ENCODE measurements at regions of chr1 and their contacts with region 1.

Region 1: DNA sequence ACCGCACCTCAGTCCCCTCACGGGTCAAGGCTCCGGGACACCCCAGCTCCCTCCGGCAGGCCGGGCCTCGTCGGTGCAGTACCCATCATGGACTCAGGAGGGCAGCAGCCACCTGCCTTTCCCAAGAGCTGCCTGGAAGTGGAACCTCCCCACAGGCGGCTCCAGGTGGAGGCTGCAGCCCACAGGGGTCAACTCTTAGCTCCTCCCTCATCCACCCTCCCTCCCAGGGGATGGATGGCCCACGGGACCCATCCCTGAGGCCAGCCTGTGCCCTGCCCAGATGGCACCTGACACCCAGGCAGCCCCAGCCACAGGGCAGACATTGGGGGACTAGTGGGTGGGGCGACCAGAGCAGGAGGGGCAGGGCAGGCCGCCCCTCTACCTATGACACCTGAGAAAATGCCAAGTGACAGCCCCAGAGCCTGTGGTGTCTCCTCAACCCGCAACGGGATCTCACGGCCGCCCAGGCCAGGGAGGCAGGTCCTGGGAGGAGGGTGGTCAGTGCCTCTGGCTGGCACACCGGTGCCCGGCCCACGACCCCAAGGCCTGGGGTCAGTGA is 1.2 kb upstream of the ARHGEF16 start:
- DNase-seq: peak; percentile 51 to 85 (median 74)
- ATAC-seq: peak; percentile 89
- H3K4me3 ChIP-seq: no peak overlapping the region
- H3K4me3 Mint-ChIP-seq: peak overlapping the region; percentile 76
- H3K27ac ChIP-seq: no peak overlapping the region
- H3K27ac Mint-ChIP-seq: no peak overlapping the region
- H3K4me1 ChIP-seq: peaks cover 11% of the 10 kb centered on the region
- H3K4me1 Mint-ChIP-seq: no peaks in the 10 kb centered on the region
- H3K27me3 ChIP-seq: peaks cover 7 to 15% of the 10 kb centered on the region in 2 experiments
- H3K27me3 Mint-ChIP-seq: peaks cover 17% of the 10 kb centered on the region
- CTCF ChIP-seq: peak; percentile 79

Region 2: GRCh38 chr1:3237994-3238702 is 215.1 kb before region 1 on chr1:
- CTCF ChIA-PET with region 1: no interaction called
- POLR2A ChIA-PET with region 1: no interaction called
- intact Hi-C with region 1: no loop called
- DNase-seq: no peak
- ATAC-seq: no peak
- H3K4me3 ChIP-seq: no peak overlapping the region
- H3K4me3 Mint-ChIP-seq: no peak overlapping the region
- H3K27ac ChIP-seq: no peak overlapping the region
- H3K27ac Mint-ChIP-seq: no peak overlapping the region
- H3K4me1 ChIP-seq: no peaks in the 10 kb centered on the region
- H3K4me1 Mint-ChIP-seq: no peaks in the 10 kb centered on the region
- H3K27me3 ChIP-seq: no peaks in the 10 kb centered on the region
- H3K27me3 Mint-ChIP-seq: no peaks in the 10 kb centered on the region
- CTCF ChIP-seq: no peak

Region 3: DNA sequence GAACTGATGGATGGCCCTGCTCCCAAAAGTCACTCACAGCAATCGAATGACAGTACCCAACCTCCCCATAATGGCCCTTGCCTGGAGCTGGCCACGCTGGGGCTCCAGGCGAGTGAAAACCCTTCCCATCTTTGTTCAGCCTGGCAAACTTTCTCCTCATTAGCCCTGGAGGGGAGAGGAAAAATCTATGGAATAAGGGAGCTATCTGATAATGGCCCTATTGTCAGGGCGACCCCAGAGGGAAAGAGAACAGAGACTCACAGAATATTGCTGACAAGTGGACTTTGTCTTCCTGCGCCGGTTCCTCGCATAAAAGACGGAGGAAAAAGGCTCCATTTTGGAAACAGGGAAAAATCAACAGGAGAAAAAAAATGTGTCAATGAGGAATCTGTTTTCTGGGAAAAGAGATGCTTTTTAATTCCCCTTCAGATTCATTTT is 11.9 kb before region 1 on chr1:
- CTCF ChIA-PET with region 1: interaction called, 19 read pairs
- POLR2A ChIA-PET with region 1: no interaction called
- intact Hi-C with region 1: no loop called
- DNase-seq: no peak
- ATAC-seq: no peak
- H3K4me3 ChIP-seq: no peak overlapping the region
- H3K4me3 Mint-ChIP-seq: no peak overlapping the region
- H3K27ac ChIP-seq: no peak overlapping the region
- H3K27ac Mint-ChIP-seq: no peak overlapping the region
- H3K4me1 ChIP-seq: no peaks in the 10 kb centered on the region
- H3K4me1 Mint-ChIP-seq: no peaks in the 10 kb centered on the region
- H3K27me3 ChIP-seq: no peaks in the 10 kb centered on the region
- H3K27me3 Mint-ChIP-seq: peaks cover 9% of the 10 kb centered on the region
- CTCF ChIP-seq: no peak

Region 4: DNA sequence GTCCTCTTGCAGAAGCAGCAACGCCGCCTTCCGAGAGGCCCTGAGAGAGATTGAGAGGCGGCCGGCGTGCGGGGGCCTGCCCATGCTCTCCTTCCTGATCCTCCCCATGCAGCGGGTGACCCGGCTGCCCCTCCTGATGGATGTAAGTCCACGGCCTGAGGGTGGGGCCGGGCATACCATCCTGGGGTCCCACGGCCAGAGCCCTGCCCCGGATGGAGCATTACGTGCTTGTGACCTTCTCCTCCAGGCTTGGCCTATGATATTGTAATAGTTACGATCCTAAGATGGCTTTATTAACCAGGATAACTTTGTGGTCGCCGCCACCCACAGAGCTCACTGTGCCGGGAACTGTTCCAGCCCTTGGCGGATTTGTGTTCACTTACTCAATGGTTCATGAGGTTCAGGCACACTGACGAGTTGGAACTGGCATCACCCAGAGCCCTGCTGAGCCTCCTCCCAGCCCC is 20.1 kb after region 1 on chr1:
- CTCF ChIA-PET with region 1: interaction called, 11 read pairs
- POLR2A ChIA-PET with region 1: no interaction called
- intact Hi-C with region 1: no loop called
- DNase-seq: no peak
- ATAC-seq: no peak
- H3K4me3 ChIP-seq: no peak overlapping the region
- H3K4me3 Mint-ChIP-seq: no peak overlapping the region
- H3K27ac ChIP-seq: no peak overlapping the region
- H3K27ac Mint-ChIP-seq: no peak overlapping the region
- H3K4me1 ChIP-seq: no peaks in the 10 kb centered on the region
- H3K4me1 Mint-ChIP-seq: no peaks in the 10 kb centered on the region
- H3K27me3 ChIP-seq: no peaks in the 10 kb centered on the region
- H3K27me3 Mint-ChIP-seq: peaks cover 2% of the 10 kb centered on the region
- CTCF ChIP-seq: no peak

Region 5: GRCh38 chr1:3483801-3484444 is 30.6 kb after region 1 on chr1:
- CTCF ChIA-PET with region 1: interaction called, 9 read pairs
- POLR2A ChIA-PET with region 1: no interaction called
- intact Hi-C with region 1: loop called in 1 of 2 experiments (anchors 1 kb)
- DNase-seq: peak in 5 of 9 experiments; percentile 9 to 46 (median 40)
- ATAC-seq: no peak
- H3K4me3 ChIP-seq: no peak overlapping the region
- H3K4me3 Mint-ChIP-seq: no peak overlapping the region
- H3K27ac ChIP-seq: no peak overlapping the region
- H3K27ac Mint-ChIP-seq: no peak overlapping the region
- H3K4me1 ChIP-seq: no peaks in the 10 kb centered on the region
- H3K4me1 Mint-ChIP-seq: no peaks in the 10 kb centered on the region
- H3K27me3 ChIP-seq: no peaks in the 10 kb centered on the region
- H3K27me3 Mint-ChIP-seq: no peaks in the 10 kb centered on the region
- CTCF ChIP-seq: peak; percentile 78

Region 6: DNA sequence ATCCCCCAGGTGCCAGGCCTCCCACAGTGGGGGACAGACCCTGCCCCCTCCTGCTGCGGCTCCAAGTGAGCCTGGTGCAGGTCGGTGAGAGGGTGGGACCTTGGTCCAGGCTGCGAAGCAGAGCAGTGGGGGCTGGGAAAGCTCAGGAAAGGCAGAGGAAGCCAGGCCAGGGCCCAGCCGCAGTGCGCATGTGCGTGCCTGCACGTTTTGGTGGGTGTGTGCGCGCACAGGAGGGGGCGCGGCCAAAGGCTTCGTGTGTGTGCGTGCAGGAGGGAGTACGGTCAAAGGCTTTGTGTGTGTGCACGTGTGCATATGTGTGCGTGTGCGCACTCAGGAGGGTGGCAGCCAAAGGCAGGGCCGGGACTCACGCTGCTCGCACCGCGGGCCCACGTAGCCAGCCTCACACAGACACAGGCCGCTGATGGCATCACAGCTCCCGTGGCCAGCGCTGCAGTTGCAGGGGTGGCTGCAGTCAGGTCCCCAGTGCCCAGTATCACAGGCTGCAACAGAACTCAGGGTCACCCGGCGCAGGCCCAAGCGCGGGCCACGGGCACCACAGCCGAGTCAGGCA is 47.1 kb after region 1 on chr1:
- CTCF ChIA-PET with region 1: no interaction called
- POLR2A ChIA-PET with region 1: no interaction called
- intact Hi-C with region 1: no loop called
- DNase-seq: no peak
- ATAC-seq: no peak
- H3K4me3 ChIP-seq: no peak overlapping the region
- H3K4me3 Mint-ChIP-seq: no peak overlapping the region
- H3K27ac ChIP-seq: no peak overlapping the region
- H3K27ac Mint-ChIP-seq: no peak overlapping the region
- H3K4me1 ChIP-seq: no peaks in the 10 kb centered on the region
- H3K4me1 Mint-ChIP-seq: no peaks in the 10 kb centered on the region
- H3K27me3 ChIP-seq: no peaks in the 10 kb centered on the region
- H3K27me3 Mint-ChIP-seq: no peaks in the 10 kb centered on the region
- CTCF ChIP-seq: no peak